ENCODE measurements at regions of chr2 and their contacts with region 1.

Region 1: GRCh38 chr2:176291809-176292283 is 22.6 kb downstream of the MTX2 start:
- DNase-seq: peak; percentile 48
- ATAC-seq: peak; percentile 88
- H3K4me3 ChIP-seq: peak overlapping the region; percentile 1; the same call in 1 of the 2 replicates
- H3K27ac ChIP-seq: no peak overlapping the region
- H3K4me1 ChIP-seq: peaks cover 15% of the 10 kb centered on the region; the same call in 1 of the 2 replicates
- H3K27me3 ChIP-seq: no peaks in the 10 kb centered on the region
- CTCF ChIP-seq: no peak
- EP300 ChIP-seq: no peak
- POLR2A ChIP-seq: no peak
- RAD21 ChIP-seq: peak; percentile 5; the same call in 1 of the 2 replicates

Region 2: GRCh38 chr2:175778161-175778560 is 513.7 kb before region 1 on chr2:
- CTCF ChIA-PET with region 1: no interaction called
- POLR2A ChIA-PET with region 1: no interaction called
- RAD21 ChIA-PET with region 1: no interaction called
- SMC1A ChIA-PET with region 1: no interaction called
- in situ Hi-C with region 1: no loop called
- intact Hi-C with region 1: no loop called
- DNase-seq: no peak
- ATAC-seq: no peak
- H3K4me3 ChIP-seq: no peak overlapping the region
- H3K27ac ChIP-seq: no peak overlapping the region
- H3K4me1 ChIP-seq: no peaks in the 10 kb centered on the region
- H3K27me3 ChIP-seq: no peaks in the 10 kb centered on the region; a peak in 1 of 4 replicates
- CTCF ChIP-seq: no peak
- EP300 ChIP-seq: no peak
- POLR2A ChIP-seq: no peak
- RAD21 ChIP-seq: no peak

Region 3: DNA sequence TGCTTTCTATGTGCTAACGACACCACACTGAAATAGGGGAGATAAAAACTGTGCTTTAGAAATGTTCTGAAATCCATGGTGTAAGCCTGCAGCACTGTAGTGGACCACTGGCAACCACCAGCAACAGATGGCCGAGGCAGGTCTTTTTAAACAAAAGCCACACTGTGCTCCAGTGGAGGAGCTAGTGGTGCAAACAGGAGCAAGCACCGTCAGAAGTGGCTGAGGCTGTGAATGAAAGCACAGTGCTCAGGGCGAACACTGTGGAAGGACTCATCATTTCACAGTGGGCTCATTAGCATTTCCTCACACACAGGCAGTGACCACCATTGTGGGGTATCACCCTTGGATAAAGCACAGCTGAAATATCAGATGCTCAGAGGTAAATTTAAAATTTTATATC is 45.5 kb before region 1 on chr2:
- CTCF ChIA-PET with region 1: interaction called, 5 read pairs
- POLR2A ChIA-PET with region 1: interaction called, 10 read pairs
- RAD21 ChIA-PET with region 1: no interaction called
- SMC1A ChIA-PET with region 1: no interaction called
- in situ Hi-C with region 1: no loop called
- intact Hi-C with region 1: no loop called
- DNase-seq: no peak
- ATAC-seq: no peak
- H3K4me3 ChIP-seq: no peak overlapping the region
- H3K27ac ChIP-seq: no peak overlapping the region
- H3K4me1 ChIP-seq: no peaks in the 10 kb centered on the region
- H3K27me3 ChIP-seq: no peaks in the 10 kb centered on the region; a peak in 3 of 4 replicates
- CTCF ChIP-seq: no peak
- EP300 ChIP-seq: no peak
- POLR2A ChIP-seq: no peak
- RAD21 ChIP-seq: no peak

Region 4: DNA sequence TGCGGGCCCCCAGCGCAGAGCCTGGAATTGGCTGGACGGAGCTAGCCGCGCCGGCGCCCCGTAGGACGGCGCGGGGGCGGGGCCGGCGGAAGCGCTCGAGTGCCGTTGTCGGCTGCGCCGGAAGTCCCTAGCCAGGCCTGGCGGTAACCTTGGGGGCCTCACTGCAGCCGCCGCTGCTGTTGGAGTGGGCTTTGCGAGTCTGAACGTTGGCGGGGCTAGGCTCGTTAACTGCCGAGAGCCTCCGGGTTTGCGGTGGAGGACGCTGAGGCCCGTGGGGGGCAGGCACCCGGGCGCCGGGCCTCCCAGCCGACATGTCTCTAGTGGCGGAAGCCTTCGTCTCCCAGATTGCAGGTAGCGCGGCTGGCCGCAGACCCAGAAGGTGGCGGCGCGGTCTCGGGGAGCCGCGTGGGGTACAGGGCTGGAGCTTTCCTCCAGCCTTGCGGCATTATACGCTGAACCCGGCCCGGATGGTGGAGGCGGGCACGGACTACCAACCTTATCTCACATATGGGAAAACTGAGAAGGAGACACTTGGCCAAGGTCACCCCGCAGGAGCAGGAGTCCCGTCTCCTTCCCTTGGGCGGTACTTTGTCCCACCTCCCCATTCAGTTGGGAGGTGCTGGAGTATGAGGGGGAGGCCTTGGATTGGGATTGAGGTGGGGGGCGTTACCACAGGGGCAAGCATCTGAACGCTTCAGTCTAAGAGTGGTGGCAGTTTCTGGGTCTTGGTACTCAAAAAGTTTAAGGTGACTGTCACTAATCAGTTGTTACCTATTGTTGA is 22.3 kb before region 1 on chr2 and contains the start of gene MTX2:
- CTCF ChIA-PET with region 1: no interaction called
- POLR2A ChIA-PET with region 1: interaction called, 8 read pairs
- RAD21 ChIA-PET with region 1: no interaction called
- SMC1A ChIA-PET with region 1: interaction called, 4 read pairs
- in situ Hi-C with region 1: no loop called
- intact Hi-C with region 1: loop called (anchors 2 kb)
- DNase-seq: peak; percentile 19
- ATAC-seq: peak; percentile 98
- H3K4me3 ChIP-seq: peak within 1 kb of the TSS; percentile 91
- H3K27ac ChIP-seq: peak within 1 kb of the TSS; percentile 81
- H3K4me1 ChIP-seq: no peaks in the 10 kb centered on the region
- H3K27me3 ChIP-seq: no peaks in the 10 kb centered on the region
- CTCF ChIP-seq: peak in 2 of 3 experiments; percentile 2 to 25; a peak in 1 of 6 replicates
- EP300 ChIP-seq: no peak
- POLR2A ChIP-seq: peak; percentile 97
- RAD21 ChIP-seq: 0 out of 2 replicates have a peak, but pooled peaks have one; percentile 16
- polyA plus RNA-seq, gene MTX2: 15.7 to 36.8 TPM

Measured in GM12878 (cell line).